ENCODE measurements at regions of chr16 and their contacts with region 1.

Region 1: DNA sequence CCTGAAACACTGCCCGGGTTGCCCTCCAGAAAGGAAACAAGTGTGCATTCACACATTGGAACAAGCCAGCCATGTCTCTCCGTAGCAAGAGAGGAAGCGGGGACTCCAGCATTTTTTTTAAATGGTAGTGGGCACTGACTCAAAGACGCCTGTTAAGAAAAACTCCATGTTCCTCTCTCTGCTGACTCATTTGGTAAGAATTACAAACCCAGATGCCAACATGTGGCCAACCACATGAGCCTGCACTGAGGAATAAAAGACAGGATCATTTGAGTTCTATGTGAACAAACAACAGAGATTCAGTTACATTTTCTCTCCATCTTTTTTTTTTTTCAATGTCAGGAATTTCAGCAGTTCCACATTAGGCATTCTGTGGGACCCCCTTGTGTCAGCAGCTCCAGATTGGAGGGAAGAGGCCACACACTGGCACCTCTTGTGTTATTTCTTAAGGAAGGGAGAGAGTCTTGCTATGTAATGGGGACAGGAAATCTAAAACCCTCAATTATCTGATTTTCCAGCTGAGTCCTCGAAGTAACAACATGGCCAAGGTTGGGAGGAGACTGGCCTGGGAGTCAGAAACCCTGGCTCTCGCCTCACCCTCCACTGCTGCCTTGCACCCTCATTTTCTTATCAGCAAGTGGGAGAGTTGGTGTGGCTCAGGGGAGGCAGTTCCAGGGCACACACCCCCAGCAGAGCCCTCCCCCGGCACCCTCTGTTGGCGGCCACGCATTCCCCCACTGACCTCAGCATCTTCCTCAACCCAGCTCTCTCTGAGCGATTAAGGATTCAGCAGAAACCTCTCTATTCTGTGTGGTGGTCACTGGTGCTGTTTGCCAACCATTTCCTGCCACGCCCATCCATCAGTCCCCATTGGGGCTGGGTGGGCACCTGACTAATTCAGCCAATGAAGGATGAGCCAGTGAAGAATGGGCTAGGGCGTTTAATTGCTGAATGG is 173.0 kb downstream of the FOXL1 start:
- H3K4me3 ChIP-seq: no peak overlapping the region
- H3K27ac ChIP-seq: no peak overlapping the region
- H3K4me1 ChIP-seq: no peaks in the 10 kb centered on the region
- CTCF ChIP-seq: no peak

Region 2: GRCh38 chr16:86740906-86741799 is 10.2 kb before region 1 on chr16:
- CTCF ChIA-PET with region 1: no interaction called
- POLR2A ChIA-PET with region 1: no interaction called
- H3K4me3 ChIP-seq: peak overlapping the region; percentile 35
- H3K27ac ChIP-seq: peak overlapping the region; percentile 60; the same call in 1 of the 2 replicates
- H3K4me1 ChIP-seq: peaks cover 5% of the 10 kb centered on the region
- CTCF ChIP-seq: no peak

Region 3: GRCh38 chr16:86761111-86762031 is 10.0 kb after region 1 on chr16:
- CTCF ChIA-PET with region 1: interaction called, 18 read pairs
- POLR2A ChIA-PET with region 1: no interaction called
- H3K4me3 ChIP-seq: no peak overlapping the region
- H3K27ac ChIP-seq: no peak overlapping the region; the same call in 1 of the 2 replicates
- H3K4me1 ChIP-seq: no peaks in the 10 kb centered on the region
- CTCF ChIP-seq: peak; percentile 79

Measured in HEK293 (cell line).